Right cardiac atrium (tissue), 5 donors: ENCODE measurements at regions of chr17 and their contacts with region 1.

Region 1: DNA sequence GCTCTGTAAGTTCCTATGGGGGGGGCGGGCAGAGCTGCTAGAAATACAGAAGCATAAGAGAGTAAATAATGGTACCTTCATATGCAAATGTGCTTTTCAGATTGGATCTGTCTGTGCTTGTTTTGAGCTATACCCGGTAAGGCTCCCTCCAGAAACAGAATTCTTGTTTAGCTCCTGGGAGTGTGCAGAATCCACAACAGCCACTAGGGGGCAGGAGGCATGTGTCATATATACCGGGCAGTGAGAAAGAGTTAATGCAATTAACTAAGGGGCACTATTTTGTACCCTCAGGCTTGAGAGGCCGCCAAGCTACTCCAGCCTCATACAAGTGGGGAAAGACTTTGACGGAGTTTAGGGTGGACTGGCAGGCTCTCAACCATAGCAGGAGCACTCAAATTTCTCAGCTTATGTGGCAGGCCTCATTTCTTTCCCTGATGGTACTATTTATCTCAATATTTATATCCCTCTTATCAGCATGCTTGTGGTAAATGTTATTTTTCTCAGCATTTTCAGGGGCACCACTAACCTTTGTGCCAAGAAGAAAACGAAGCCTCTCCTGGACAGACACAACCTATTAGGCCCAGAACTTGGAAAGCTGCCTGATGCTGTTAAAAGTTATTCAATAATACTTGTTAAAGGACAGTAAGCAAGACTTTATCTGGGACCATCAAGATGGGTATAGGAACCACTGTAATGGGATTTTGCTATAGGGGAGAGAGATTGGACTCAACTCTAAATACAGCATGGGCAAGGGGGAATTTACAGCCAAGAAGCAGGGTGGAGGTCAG is 10.7 kb upstream of the CENPV start:
- DNase-seq: peak; percentile 75 to 91 (median 82)
- ATAC-seq: peak; percentile 76 to 89
- H3K4me3 ChIP-seq: no peak overlapping the region
- H3K27ac ChIP-seq: no peak overlapping the region
- H3K4me1 ChIP-seq: no peaks in the 10 kb centered on the region
- H3K27me3 ChIP-seq: no peaks in the 10 kb centered on the region

Region 2: DNA sequence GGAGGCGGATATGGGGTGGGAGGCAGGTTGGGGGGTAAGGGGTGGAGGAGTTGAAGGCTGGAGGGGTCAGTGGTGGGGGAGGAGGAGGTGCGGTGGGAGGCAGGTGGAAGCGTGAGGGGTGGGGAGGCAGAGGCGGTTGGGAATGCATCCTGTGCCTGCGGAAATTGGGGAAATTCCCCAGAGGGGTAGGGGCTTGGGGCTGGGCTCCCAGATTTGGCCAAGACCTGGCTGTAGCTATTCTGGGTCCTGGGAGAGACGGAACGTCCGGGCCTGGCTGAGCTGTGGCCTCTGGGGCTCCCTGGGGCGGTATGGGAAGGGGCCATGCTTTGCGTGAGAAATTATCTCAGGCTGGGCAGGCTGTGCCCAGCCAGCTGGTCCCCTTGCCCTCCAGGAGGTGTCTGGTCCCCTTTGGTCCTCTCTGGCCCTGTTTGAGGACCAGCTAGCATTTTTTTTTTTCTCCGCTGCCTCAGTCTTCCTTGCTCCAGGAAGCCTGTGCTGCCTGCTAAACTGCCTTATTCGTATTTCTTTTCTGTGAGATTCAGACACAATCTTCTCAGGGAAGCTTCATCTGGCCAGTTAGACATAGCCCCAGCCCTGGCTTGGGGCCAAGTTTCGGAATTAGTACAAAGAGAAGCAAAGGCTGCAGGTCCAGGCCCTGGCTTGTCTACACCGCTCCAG is 44.1 kb after region 1 on chr17:
- intact Hi-C with region 1: no loop called
- DNase-seq: peak; percentile 64 to 91 (median 78)
- ATAC-seq: peak; percentile 59 to 64
- H3K4me3 ChIP-seq: no peak overlapping the region
- H3K27ac ChIP-seq: peak overlapping the region; percentile 76
- H3K4me1 ChIP-seq: peaks cover 3% of the 10 kb centered on the region
- H3K27me3 ChIP-seq: no peaks in the 10 kb centered on the region

Region 3: GRCh38 chr17:16521070-16521727 is 157.3 kb after region 1 on chr17:
- intact Hi-C with region 1: loop called in 3 of 4 experiments (anchors 5 to 10 kb)
- DNase-seq: peak; percentile 66 to 73 (median 73)
- ATAC-seq: peak; percentile 90 to 93
- H3K4me3 ChIP-seq: no peak overlapping the region
- H3K27ac ChIP-seq: no peak overlapping the region
- H3K4me1 ChIP-seq: no peaks in the 10 kb centered on the region
- H3K27me3 ChIP-seq: no peaks in the 10 kb centered on the region